Testis (tissue), 5 donors: ENCODE measurements at regions of chr17 and their contacts with region 1.

Region 1: GRCh38 chr17:75109407-75110233 is at the start of gene ARMC7:
- DNase-seq: peak; percentile 93
- H3K4me3 ChIP-seq: peak within 1 kb of the TSS; percentile 60 to 87
- H3K27ac ChIP-seq: peak within 1 kb of the TSS; percentile 22 to 33
- H3K4me1 ChIP-seq: peaks cover 10% of the 10 kb centered on the region
- H3K27me3 ChIP-seq: no peaks in the 10 kb centered on the region
- CTCF ChIP-seq: no peak
- POLR2A ChIP-seq: no peak
- total RNA-seq, gene ARMC7: 10.0 to 11.8 TPM

Region 2: GRCh38 chr17:74961657-74962490 is 147.7 kb before region 1 on chr17:
- intact Hi-C with region 1: loop called (anchors 10 kb)
- DNase-seq: peak; percentile 95
- H3K4me3 ChIP-seq: no peak overlapping the region
- H3K27ac ChIP-seq: no peak overlapping the region
- H3K4me1 ChIP-seq: no peaks in the 10 kb centered on the region
- H3K27me3 ChIP-seq: no peaks in the 10 kb centered on the region
- CTCF ChIP-seq: peak; percentile 91 to 92 (median 91)
- POLR2A ChIP-seq: no peak

Region 3: GRCh38 chr17:75205037-75205792 is 95.6 kb after region 1 on chr17 and contains the start of gene NUP85:
- intact Hi-C with region 1: loop called (anchors 10 kb)
- DNase-seq: peak; percentile 93
- H3K4me3 ChIP-seq: peak within 1 kb of the TSS; percentile 81 to 92
- H3K27ac ChIP-seq: peak within 1 kb of the TSS; percentile 92 to 97
- H3K4me1 ChIP-seq: peaks cover 11% of the 10 kb centered on the region
- H3K27me3 ChIP-seq: no peaks in the 10 kb centered on the region
- CTCF ChIP-seq: peak in 1 of 3 experiments; percentile 28
- POLR2A ChIP-seq: no peak
- total RNA-seq, gene NUP85: 57.8 to 76.1 TPM